Activated CD8-positive, alpha-beta T cell treated with anti-CD3 and anti-CD28 coated beads, Interleukin-2, amount 10 ng/mL, durations not matched to agents 7 days and 5 days (primary cell): ENCODE measurements at regions of chr15 and their contacts with region 1.

Region 1: GRCh38 chr15:70466895-70467529 is 296.3 kb downstream of the UACA start:
- DNase-seq: peak; percentile 75
- ATAC-seq: peak; percentile 84
- H3K4me3 Mint-ChIP-seq: no peak overlapping the region
- H3K27ac Mint-ChIP-seq: no peak overlapping the region
- H3K4me1 Mint-ChIP-seq: peaks cover 7% of the 10 kb centered on the region
- H3K27me3 Mint-ChIP-seq: peaks cover 76% of the 10 kb centered on the region

Region 2: GRCh38 chr15:69475769-69476358 is 991.1 kb before region 1 on chr15:
- CTCF ChIA-PET with region 1: interaction called, 57 read pairs
- POLR2A ChIA-PET with region 1: no interaction called
- DNase-seq: peak; percentile 79
- ATAC-seq: peak; percentile 74
- H3K4me3 Mint-ChIP-seq: no peak overlapping the region
- H3K27ac Mint-ChIP-seq: no peak overlapping the region
- H3K4me1 Mint-ChIP-seq: peaks cover 4% of the 10 kb centered on the region
- H3K27me3 Mint-ChIP-seq: peaks cover 34% of the 10 kb centered on the region

Region 3: DNA sequence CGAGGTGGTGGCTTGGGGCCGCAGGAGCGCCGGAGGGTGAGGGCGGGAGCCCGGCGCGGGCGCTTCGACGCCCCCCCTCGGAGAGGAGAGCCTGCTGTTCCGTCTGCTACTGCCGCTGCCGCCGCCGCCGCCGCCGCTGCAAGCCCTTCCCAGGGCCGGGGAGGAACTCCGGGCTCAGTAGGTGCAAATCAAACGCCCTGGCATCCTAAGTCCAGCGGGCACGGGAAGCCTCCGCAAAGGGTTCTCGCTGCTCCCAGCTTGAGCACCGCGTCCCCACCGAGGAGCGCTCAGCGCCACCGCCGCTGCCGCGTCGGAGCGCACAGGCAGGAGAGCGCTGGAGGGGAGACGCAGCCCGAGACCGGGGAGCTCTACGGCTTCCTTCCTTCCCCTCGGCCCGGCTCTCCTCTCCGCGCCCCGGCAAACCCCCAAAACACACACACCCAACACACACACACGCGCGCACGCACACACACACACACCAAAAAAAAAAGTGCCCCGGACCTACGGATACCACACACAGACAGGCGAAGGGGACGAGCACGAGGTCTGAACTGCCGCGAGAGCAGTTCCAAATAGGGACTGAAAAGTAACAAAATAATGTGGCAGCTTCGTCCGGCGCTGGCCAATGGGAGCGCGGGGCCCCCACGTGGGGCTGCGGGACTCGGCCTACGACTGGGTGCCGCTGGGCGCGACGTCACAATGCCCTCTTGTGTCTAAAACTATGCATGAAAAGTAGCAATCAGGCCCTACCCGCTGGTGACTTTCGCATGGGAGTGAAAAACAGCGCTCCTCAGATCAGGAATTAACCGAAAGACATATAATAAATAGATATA is 369.5 kb before region 1 on chr15 and contains the start of gene TLE3:
- CTCF ChIA-PET with region 1: interaction called, 13 read pairs
- POLR2A ChIA-PET with region 1: no interaction called
- DNase-seq: peak; percentile 99
- ATAC-seq: peak; percentile 66
- H3K4me3 Mint-ChIP-seq: peak within 1 kb of the TSS; percentile 97
- H3K27ac Mint-ChIP-seq: peak within 1 kb of the TSS; percentile 98
- H3K4me1 Mint-ChIP-seq: peaks cover 63% of the 10 kb centered on the region
- H3K27me3 Mint-ChIP-seq: peaks cover 4% of the 10 kb centered on the region
- total RNA-seq, gene TLE3: 64.0 to 71.1 TPM

Region 4: GRCh38 chr15:70447928-70448698 is 18.9 kb before region 1 on chr15:
- CTCF ChIA-PET with region 1: interaction called, 12 read pairs
- POLR2A ChIA-PET with region 1: interaction called, 3 read pairs
- DNase-seq: peak; percentile 80
- ATAC-seq: peak; percentile 73
- H3K4me3 Mint-ChIP-seq: peak overlapping the region; percentile 46
- H3K27ac Mint-ChIP-seq: peak overlapping the region; percentile 53
- H3K4me1 Mint-ChIP-seq: peaks cover 64% of the 10 kb centered on the region
- H3K27me3 Mint-ChIP-seq: peaks cover 37% of the 10 kb centered on the region

Region 5: GRCh38 chr15:70488002-70488605 is 21.1 kb after region 1 on chr15:
- CTCF ChIA-PET with region 1: interaction called, 106 read pairs
- POLR2A ChIA-PET with region 1: no interaction called
- DNase-seq: peak; percentile 82
- ATAC-seq: no peak
- H3K4me3 Mint-ChIP-seq: no peak overlapping the region
- H3K27ac Mint-ChIP-seq: no peak overlapping the region
- H3K4me1 Mint-ChIP-seq: peaks cover 72% of the 10 kb centered on the region
- H3K27me3 Mint-ChIP-seq: peaks cover 37% of the 10 kb centered on the region